Gastrocnemius medialis (tissue), 4 donors: ENCODE measurements at regions of chr10 and their contacts with region 1.

Region 1: DNA sequence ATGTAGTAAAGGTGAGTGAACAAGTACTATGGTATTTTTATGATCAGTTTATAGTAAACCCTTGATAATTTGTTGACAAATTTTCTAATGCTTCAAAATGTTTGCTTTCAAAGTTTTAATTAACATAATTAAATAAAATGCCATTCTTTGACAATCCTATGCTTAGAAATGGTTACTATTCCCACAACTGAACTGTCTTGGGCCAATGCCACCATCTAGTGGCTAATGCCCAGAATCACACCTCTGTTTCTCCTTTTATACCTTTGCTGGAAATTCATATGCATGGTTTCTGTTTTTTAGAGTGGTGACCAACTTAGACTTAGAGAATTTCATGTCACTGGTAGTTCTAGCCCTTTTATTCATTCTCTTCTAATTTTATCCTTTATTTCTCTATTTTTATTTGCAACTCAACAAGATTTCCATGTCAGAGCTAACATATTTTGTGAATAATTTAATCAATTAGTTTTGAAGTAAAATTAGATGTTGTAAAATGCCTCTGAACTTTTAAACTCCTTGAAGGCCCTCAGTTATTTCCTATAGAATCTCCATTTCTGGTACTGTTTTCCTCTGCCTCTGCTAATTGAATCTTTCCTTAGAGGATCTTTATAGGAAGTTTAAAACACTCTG is 31.1 kb downstream of the PCGF5 start:
- DNase-seq: peak; percentile 23 to 39
- ATAC-seq: peak in 1 of 2 donors; percentile 68
- H3K4me3 ChIP-seq: no peak overlapping the region
- H3K27ac ChIP-seq: no peak overlapping the region
- H3K4me1 ChIP-seq: peaks cover 3 to 10% of the 10 kb centered on the region in 2 donors
- H3K27me3 ChIP-seq: no peaks in the 10 kb centered on the region
- CTCF ChIP-seq: peak; percentile 75 to 92 (median 90)
- POLR2A ChIP-seq: no peak

Region 2: DNA sequence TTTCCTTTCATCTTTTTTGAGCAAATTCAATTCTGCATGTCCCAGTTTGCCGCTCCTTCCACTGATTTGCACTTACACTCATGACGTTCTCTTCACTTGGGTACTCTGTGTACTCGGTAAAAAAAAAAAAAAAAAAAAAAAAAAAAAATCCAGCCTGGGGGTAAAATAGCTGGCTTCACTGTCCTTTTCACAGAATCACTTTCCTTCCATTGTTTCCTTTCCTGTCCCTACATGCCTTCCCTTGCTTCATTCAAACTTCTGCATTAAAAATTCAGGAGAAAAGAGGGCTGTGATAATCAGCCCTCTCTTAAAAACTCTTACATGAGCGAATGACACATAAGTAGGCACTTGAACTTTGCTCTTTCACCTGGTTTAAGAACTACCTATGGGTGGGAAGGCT is 339.4 kb before region 1 on chr10:
- in situ Hi-C with region 1: loop called (anchors 5 to 10 kb)
- intact Hi-C with region 1: loop called (anchors 1 kb)
- DNase-seq: no peak
- ATAC-seq: no peak
- H3K4me3 ChIP-seq: no peak overlapping the region
- H3K27ac ChIP-seq: peak overlapping the region in 3 of 4 donors; percentile 27 to 70 (median 56)
- H3K4me1 ChIP-seq: no peaks in the 10 kb centered on the region
- H3K27me3 ChIP-seq: no peaks in the 10 kb centered on the region
- CTCF ChIP-seq: no peak
- POLR2A ChIP-seq: no peak

Region 3: GRCh38 chr10:90920986-90921666 is 330.4 kb before region 1 on chr10 and contains the start of gene ANKRD1:
- in situ Hi-C with region 1: loop called in 3 of 4 experiments (anchors 5 to 10 kb)
- intact Hi-C with region 1: no loop called
- DNase-seq: peak; percentile 69 to 88
- ATAC-seq: peak; percentile 94 to 95
- H3K4me3 ChIP-seq: peak within 1 kb of the TSS in 3 of 4 donors; percentile 26 to 43 (median 36)
- H3K27ac ChIP-seq: peak within 1 kb of the TSS; percentile 78 to 87 (median 84)
- H3K4me1 ChIP-seq: peaks cover 47 to 49% of the 10 kb centered on the region in 2 donors
- H3K27me3 ChIP-seq: no peaks in the 10 kb centered on the region
- CTCF ChIP-seq: no peak
- POLR2A ChIP-seq: peak in 1 of 2 donors; percentile 40
- total RNA-seq, gene ANKRD1: 18.6 to 168 (median 98.5) TPM

Region 4: GRCh38 chr10:91006001-91006751 is 245.4 kb before region 1 on chr10:
- in situ Hi-C with region 1: loop called (anchors 5 to 10 kb)
- intact Hi-C with region 1: loop called (anchors 1 kb)
- DNase-seq: peak; percentile 14 to 47
- ATAC-seq: peak; percentile 88 to 97
- H3K4me3 ChIP-seq: no peak overlapping the region
- H3K27ac ChIP-seq: peak overlapping the region in 1 of 4 donors; percentile 23
- H3K4me1 ChIP-seq: peaks cover 0 to 4% of the 10 kb centered on the region in 2 donors
- H3K27me3 ChIP-seq: no peaks in the 10 kb centered on the region
- CTCF ChIP-seq: peak; percentile 88 to 95 (median 91)
- POLR2A ChIP-seq: no peak

Region 5: DNA sequence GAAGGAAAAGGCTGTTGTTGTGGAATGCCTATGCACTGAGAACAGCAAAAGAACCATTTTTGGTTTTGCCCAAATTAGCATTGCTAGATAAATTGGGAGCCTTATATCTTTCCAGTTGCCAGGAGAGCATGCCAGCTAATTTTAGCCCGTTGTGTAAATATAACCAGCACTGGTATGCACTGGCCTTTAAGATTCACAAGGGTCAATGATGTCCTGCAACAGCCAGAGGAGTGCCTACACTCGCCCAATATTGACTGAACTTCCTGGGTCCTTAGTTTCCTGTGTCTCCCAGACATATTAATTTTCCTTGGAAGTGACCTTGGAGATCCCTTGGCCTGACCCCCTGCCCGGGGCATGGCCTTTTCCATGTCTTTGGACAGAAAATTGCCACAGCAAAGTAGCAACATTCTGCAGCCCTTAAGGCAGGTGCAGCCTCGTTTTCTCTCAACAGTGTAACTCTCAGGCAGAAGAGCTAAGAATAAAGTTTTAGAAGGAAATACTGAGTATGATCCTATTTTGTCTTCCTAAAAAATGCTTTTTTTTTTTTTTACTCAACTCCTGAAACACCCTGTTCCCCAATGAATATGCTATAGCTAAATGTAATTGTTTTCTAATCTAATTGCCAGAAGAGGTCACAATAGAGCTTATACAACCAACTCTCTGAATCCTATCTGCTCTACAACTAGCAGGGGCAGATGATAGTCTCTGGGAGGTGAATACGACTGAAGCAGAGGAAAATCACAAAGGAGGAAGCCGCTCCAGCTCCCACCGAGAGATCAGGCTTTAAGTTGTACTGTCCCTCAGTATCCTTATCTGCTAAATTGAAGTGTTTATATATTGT is 163.0 kb before region 1 on chr10:
- in situ Hi-C with region 1: no loop called
- intact Hi-C with region 1: loop called (anchors 1 kb)
- DNase-seq: no peak
- ATAC-seq: peak; percentile 60 to 72
- H3K4me3 ChIP-seq: no peak overlapping the region
- H3K27ac ChIP-seq: peak overlapping the region in 1 of 4 donors; percentile 29
- H3K4me1 ChIP-seq: peaks cover 8 to 9% of the 10 kb centered on the region in 2 donors
- H3K27me3 ChIP-seq: no peaks in the 10 kb centered on the region
- CTCF ChIP-seq: no peak
- POLR2A ChIP-seq: no peak

Region 6: GRCh38 chr10:91220194-91220953 is 31.2 kb before region 1 on chr10 and contains the start of gene PCGF5:
- in situ Hi-C with region 1: no loop called
- intact Hi-C with region 1: loop called (anchors 2 kb)
- DNase-seq: peak; percentile 80 to 92
- ATAC-seq: peak; percentile 85 to 92
- H3K4me3 ChIP-seq: peak within 1 kb of the TSS; percentile 76 to 88 (median 82)
- H3K27ac ChIP-seq: peak within 1 kb of the TSS; percentile 88 to 95 (median 92)
- H3K4me1 ChIP-seq: peaks cover 36 to 55% of the 10 kb centered on the region in 2 donors
- H3K27me3 ChIP-seq: no peaks in the 10 kb centered on the region
- CTCF ChIP-seq: peak; percentile 42 to 69 (median 57)
- POLR2A ChIP-seq: peak; percentile 56 to 86
- total RNA-seq, gene PCGF5: 46.2 to 63.5 (median 49.1) TPM